MCF 10A (cell line): ENCODE measurements at regions of chr20 and their contacts with region 1.

Region 1: DNA sequence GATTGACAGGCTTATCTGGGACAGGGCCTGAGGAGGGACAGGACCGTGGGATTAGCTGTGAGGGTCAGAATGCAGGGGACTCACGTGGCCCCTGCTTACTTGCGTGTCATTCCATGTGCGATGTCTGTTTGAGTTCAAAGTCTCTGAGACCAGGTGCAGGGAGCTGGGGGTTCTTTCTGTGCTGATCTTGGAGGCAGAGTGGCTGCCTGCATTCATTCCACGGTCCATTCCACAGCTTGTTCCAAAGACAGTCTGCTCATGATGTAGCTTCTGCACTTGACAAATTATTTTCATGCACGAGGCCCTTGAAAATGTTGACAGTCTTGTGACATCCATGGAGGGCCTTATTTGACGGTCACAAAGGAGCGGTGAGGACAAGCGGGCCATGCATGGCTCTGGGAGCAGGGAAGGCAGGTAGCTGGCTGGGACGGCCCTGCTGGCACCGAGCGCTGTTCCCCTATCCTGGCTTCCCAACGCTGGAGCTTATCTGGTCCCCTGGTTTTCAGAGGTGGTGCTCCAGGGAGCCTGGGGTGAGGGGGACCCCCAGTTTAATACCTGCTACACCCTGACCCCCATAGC is 156.3 kb upstream of the RNF24 start:
- DNase-seq: peak; percentile 21
- H3K4me3 Mint-ChIP-seq: peak overlapping the region; percentile 67
- H3K27ac Mint-ChIP-seq: peak overlapping the region; percentile 92
- H3K4me1 Mint-ChIP-seq: peaks cover 11% of the 10 kb centered on the region
- H3K27me3 Mint-ChIP-seq: no peaks in the 10 kb centered on the region
- CTCF ChIP-seq: no peak

Region 2: DNA sequence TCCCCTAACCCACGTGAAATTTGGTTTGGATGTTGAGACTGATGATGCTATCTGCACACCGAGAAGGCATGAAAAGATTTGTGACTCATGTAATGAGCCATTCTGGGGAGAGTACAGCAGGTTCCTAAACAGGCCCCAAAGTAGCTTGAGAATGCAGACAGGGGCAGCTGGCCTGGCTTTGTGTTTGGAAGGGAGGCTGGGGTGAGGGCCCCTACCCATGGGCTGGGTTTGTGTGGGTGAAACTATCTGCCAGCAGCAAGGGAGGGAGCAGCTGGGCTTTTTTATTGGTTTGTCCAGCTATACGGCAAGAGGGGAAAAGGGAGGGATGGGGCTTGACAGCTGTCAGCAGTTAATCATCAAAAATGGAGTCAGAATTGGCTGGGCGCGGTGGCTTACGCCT is 69.2 kb before region 1 on chr20:
- CTCF ChIA-PET with region 1: interaction called, 35 read pairs
- POLR2A ChIA-PET with region 1: interaction called, 3 read pairs
- intact Hi-C with region 1: no loop called
- DNase-seq: peak; percentile 62
- H3K4me3 Mint-ChIP-seq: peak overlapping the region; percentile 48
- H3K27ac Mint-ChIP-seq: peak overlapping the region; percentile 93
- H3K4me1 Mint-ChIP-seq: peaks cover 18% of the 10 kb centered on the region
- H3K27me3 Mint-ChIP-seq: no peaks in the 10 kb centered on the region
- CTCF ChIP-seq: no peak

Region 3: GRCh38 chr20:4192378-4193048 is 20.9 kb after region 1 on chr20:
- CTCF ChIA-PET with region 1: interaction called, 10 read pairs
- POLR2A ChIA-PET with region 1: no interaction called
- intact Hi-C with region 1: no loop called
- DNase-seq: peak; percentile 98
- H3K4me3 Mint-ChIP-seq: no peak overlapping the region
- H3K27ac Mint-ChIP-seq: no peak overlapping the region
- H3K4me1 Mint-ChIP-seq: peaks cover 37% of the 10 kb centered on the region
- H3K27me3 Mint-ChIP-seq: no peaks in the 10 kb centered on the region
- CTCF ChIP-seq: no peak